Activated CD8-positive, alpha-beta T cell treated with anti-CD3 and anti-CD28 coated beads for 36 hours (primary cell): ENCODE measurements at regions of chr1 and their contacts with region 1.

Region 1: DNA sequence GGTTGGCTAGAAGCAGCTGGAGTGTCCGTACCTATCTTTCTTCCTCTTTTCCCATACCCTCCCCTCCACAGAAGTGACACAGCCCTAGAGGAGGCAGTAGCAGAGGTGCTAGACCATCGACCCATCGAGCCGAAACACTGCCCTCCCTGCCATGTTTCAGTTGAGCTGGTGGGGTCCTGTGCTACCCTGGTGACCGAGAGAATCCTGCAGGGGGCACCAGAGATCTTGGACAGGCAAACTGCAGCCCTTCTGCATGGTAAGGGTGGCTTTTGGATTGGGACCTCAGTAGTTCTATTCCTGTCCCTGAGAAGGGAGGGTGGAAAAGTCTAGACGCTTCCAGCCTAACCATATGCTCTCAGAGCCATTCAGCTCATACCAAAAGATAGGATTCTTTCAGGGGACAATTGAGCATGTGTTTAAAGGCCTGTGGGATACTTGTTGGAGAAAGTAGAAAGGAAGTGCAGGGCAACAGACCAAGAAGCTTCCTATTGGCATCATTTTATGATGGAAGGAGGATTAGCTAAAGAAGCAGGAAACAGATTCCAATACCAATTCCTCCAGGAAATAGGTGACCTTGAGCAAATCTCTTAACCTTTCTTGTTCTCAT is 11.7 kb upstream of the BNIPL start:
- DNase-seq: peak; percentile 94
- ATAC-seq: peak; percentile 99
- H3K4me3 Mint-ChIP-seq: peak overlapping the region; percentile 31
- H3K27ac Mint-ChIP-seq: peak overlapping the region; percentile 3
- H3K4me1 Mint-ChIP-seq: peaks cover 4% of the 10 kb centered on the region
- H3K27me3 Mint-ChIP-seq: no peaks in the 10 kb centered on the region
- CTCF ChIP-seq: peak; percentile 82

Region 2: GRCh38 chr1:150829743-150830142 is 194.9 kb before region 1 on chr1:
- CTCF ChIA-PET with region 1: no interaction called
- POLR2A ChIA-PET with region 1: no interaction called
- intact Hi-C with region 1: no loop called
- DNase-seq: no peak
- ATAC-seq: no peak
- H3K4me3 Mint-ChIP-seq: no peak overlapping the region
- H3K27ac Mint-ChIP-seq: no peak overlapping the region
- H3K4me1 Mint-ChIP-seq: no peaks in the 10 kb centered on the region
- H3K27me3 Mint-ChIP-seq: no peaks in the 10 kb centered on the region
- CTCF ChIP-seq: no peak

Region 3: GRCh38 chr1:151008190-151008860 is 16.3 kb before region 1 on chr1 and contains the start of gene PRUNE1:
- CTCF ChIA-PET with region 1: interaction called, 18 read pairs
- POLR2A ChIA-PET with region 1: interaction called, 5 read pairs
- intact Hi-C with region 1: no loop called
- DNase-seq: peak; percentile 98
- ATAC-seq: peak; percentile 90
- H3K4me3 Mint-ChIP-seq: peak within 1 kb of the TSS; percentile 98
- H3K27ac Mint-ChIP-seq: peak within 1 kb of the TSS; percentile 98
- H3K4me1 Mint-ChIP-seq: peaks cover 72% of the 10 kb centered on the region
- H3K27me3 Mint-ChIP-seq: no peaks in the 10 kb centered on the region
- CTCF ChIP-seq: no peak
- total RNA-seq, gene PRUNE1: 12.4 to 15.7 TPM

Region 4: DNA sequence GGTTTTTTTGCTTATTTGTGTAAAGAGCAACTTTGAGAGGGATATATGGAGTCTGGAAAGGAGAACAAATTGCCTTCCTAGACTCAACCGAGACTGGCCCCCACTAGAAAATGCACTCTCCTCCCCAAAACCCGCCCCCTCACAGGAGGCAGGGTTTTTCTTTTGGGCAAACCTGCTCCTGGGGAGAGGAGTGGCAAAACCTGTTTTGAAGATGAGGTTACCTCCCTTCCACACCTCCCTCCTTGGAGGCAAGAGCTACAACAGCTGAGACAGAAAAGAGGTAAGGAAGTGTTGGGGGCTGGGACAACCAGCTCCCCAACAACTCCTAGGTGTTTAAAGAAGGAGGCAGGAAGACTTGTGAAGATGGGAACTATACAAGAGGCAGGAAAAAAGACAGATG is 11.7 kb after region 1 on chr1 and contains the start of gene BNIPL:
- CTCF ChIA-PET with region 1: interaction called, 15 read pairs
- POLR2A ChIA-PET with region 1: interaction called, 5 read pairs
- intact Hi-C with region 1: no loop called
- DNase-seq: no peak
- ATAC-seq: no peak
- H3K4me3 Mint-ChIP-seq: no peak within 1 kb of the TSS
- H3K27ac Mint-ChIP-seq: no peak within 1 kb of the TSS
- H3K4me1 Mint-ChIP-seq: no peaks in the 10 kb centered on the region
- H3K27me3 Mint-ChIP-seq: no peaks in the 10 kb centered on the region
- CTCF ChIP-seq: no peak
- total RNA-seq, gene BNIPL: 0.54 to 1.4 TPM

Region 5: GRCh38 chr1:151047925-151048645 is 23.4 kb after region 1 on chr1:
- CTCF ChIA-PET with region 1: interaction called, 56 read pairs
- POLR2A ChIA-PET with region 1: no interaction called
- intact Hi-C with region 1: no loop called
- DNase-seq: peak; percentile 78
- ATAC-seq: peak; percentile 85
- H3K4me3 Mint-ChIP-seq: peak overlapping the region; percentile 83
- H3K27ac Mint-ChIP-seq: peak overlapping the region; percentile 82
- H3K4me1 Mint-ChIP-seq: peaks cover 51% of the 10 kb centered on the region
- H3K27me3 Mint-ChIP-seq: no peaks in the 10 kb centered on the region
- CTCF ChIP-seq: peak; percentile 64

Region 6: GRCh38 chr1:151059078-151059907 is 34.6 kb after region 1 on chr1 and contains the start of gene CDC42SE1:
- CTCF ChIA-PET with region 1: interaction called, 20 read pairs
- POLR2A ChIA-PET with region 1: interaction called, 4 read pairs
- intact Hi-C with region 1: loop called (anchors 5 kb)
- DNase-seq: peak; percentile 92
- ATAC-seq: peak; percentile 80
- H3K4me3 Mint-ChIP-seq: peak within 1 kb of the TSS; percentile 96
- H3K27ac Mint-ChIP-seq: peak within 1 kb of the TSS; percentile 95
- H3K4me1 Mint-ChIP-seq: peaks cover 57% of the 10 kb centered on the region
- H3K27me3 Mint-ChIP-seq: no peaks in the 10 kb centered on the region
- CTCF ChIP-seq: peak; percentile 86
- total RNA-seq, gene CDC42SE1: 86.5 to 92.8 TPM

Region 7: GRCh38 chr1:151282883-151283747 is 258.5 kb after region 1 on chr1:
- CTCF ChIA-PET with region 1: no interaction called
- POLR2A ChIA-PET with region 1: no interaction called
- intact Hi-C with region 1: no loop called
- DNase-seq: peak; percentile 43
- ATAC-seq: no peak
- H3K4me3 Mint-ChIP-seq: peak overlapping the region; percentile 96
- H3K27ac Mint-ChIP-seq: peak overlapping the region; percentile 94
- H3K4me1 Mint-ChIP-seq: peaks cover 18% of the 10 kb centered on the region
- H3K27me3 Mint-ChIP-seq: no peaks in the 10 kb centered on the region
- CTCF ChIP-seq: no peak